ENCODE measurements at regions of chr4 and their contacts with region 1.

Region 1: GRCh38 chr4:7070729-7071511 is 3.1 kb upstream of the GRPEL1 start:
- DNase-seq: peak; percentile 71 to 93 (median 86)
- ATAC-seq: peak; percentile 53
- H3K4me3 ChIP-seq: no peak overlapping the region
- H3K27ac ChIP-seq: no peak overlapping the region
- H3K4me1 ChIP-seq: peaks cover 12 to 30% of the 10 kb centered on the region in 2 donors
- H3K27me3 ChIP-seq: no peaks in the 10 kb centered on the region
- CTCF ChIP-seq: peak; percentile 99

Region 2: DNA sequence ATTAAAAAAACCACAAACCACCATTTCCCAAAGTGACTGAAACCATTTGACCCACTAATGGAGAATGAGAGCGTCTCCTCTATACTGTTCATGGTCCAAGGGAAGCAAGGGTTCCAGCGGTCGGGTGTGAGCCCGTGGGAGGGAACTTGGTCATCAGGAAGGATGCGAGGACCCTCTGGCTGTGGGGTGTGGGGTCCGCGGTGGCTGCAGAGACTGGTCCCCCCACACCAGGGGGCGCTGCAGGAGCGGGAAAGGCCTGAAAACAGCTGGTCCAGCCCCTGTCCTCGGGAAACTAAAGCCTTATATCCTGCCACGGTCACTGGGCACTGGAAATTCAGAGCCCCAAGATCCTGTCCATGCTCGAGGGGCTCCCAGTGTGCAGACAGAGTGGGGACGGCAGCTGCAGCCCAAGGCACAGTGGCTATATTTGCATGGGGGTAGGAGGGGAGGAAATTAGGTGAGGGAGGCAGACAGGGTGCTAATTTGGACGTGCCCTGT is 350.7 kb before region 1 on chr4:
- intact Hi-C with region 1: loop called in 1 of 2 experiments (anchors 10 kb)
- DNase-seq: peak; percentile 69 to 96 (median 84)
- ATAC-seq: peak; percentile 78
- H3K4me3 ChIP-seq: no peak overlapping the region
- H3K27ac ChIP-seq: no peak overlapping the region
- H3K4me1 ChIP-seq: peaks cover 8 to 30% of the 10 kb centered on the region in 2 donors
- H3K27me3 ChIP-seq: no peaks in the 10 kb centered on the region
- CTCF ChIP-seq: peak; percentile 89 to 96

Region 3: DNA sequence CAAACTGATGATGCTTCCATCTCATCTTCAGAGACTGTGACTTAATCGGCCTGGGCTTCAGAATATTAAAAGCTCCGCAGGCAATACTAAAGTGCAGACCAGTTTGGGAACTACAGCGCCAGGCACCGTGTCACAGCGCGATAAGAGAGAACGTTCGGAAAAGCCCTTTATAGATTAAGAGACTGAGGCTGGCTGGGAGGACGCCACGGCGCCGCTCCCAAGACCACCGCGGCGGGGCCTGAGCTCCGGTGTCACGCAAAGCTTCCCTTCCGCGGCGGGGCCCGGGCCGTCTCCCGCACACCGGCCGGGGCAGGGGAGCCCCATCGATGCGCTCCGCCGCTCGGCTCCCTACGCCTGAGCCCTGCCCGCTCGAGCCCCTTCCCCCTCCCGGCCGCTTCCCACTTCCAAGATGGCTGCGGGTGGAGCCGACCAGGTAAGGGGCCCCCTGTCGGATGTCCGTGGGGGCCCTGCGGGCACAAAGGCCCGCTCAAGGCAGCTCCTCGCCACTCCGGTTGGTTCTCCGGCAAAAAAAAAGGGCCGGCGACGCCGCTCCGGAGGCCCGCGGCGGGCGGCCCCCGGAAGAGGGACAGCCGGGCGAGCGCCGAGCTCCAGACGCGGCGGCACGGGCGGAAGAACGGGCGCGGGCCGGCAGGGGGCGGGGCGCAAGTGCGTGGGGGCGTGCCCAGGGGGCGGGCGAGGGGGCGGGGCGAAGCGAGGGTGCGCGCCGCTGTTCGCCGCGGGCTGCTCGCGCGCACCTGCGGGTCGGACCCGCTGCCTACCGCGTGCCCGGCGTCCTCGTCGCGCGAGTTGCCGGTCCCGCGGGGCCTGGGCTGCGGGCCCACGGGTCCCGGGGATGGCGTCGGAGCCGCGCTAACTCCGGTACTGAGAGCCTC is 161.6 kb before region 1 on chr4 and contains the start of gene TBC1D14:
- intact Hi-C with region 1: loop called in 1 of 2 experiments (anchors 10 kb)
- DNase-seq: peak; percentile 90 to 97 (median 92)
- ATAC-seq: peak; percentile 96
- H3K4me3 ChIP-seq: peak within 1 kb of the TSS; percentile 80 to 83
- H3K27ac ChIP-seq: peak within 1 kb of the TSS; percentile 96 to 99
- H3K4me1 ChIP-seq: peaks cover 13 to 58% of the 10 kb centered on the region in 2 donors
- H3K27me3 ChIP-seq: peaks cover 0 to 14% of the 10 kb centered on the region in 2 donors
- CTCF ChIP-seq: peak in 1 of 2 donors; percentile 13
- polyA plus RNA-seq, gene TBC1D14: 39.2 to 47.1 (median 44.2) TPM